ENCODE measurements at regions of chrX and their contacts with region 1.

Region 1: GRCh38 chrX:134520860-134521390 is 61.0 kb downstream of the HPRT1 start:
- DNase-seq: peak; percentile 78
- H3K4me3 ChIP-seq: no peak overlapping the region
- H3K27ac ChIP-seq: no peak overlapping the region
- H3K4me1 ChIP-seq: peaks cover 16% of the 10 kb centered on the region
- H3K27me3 ChIP-seq: no peaks in the 10 kb centered on the region
- CTCF ChIP-seq: peak; percentile 47 to 62
- POLR2A ChIP-seq: no peak

Region 2: DNA sequence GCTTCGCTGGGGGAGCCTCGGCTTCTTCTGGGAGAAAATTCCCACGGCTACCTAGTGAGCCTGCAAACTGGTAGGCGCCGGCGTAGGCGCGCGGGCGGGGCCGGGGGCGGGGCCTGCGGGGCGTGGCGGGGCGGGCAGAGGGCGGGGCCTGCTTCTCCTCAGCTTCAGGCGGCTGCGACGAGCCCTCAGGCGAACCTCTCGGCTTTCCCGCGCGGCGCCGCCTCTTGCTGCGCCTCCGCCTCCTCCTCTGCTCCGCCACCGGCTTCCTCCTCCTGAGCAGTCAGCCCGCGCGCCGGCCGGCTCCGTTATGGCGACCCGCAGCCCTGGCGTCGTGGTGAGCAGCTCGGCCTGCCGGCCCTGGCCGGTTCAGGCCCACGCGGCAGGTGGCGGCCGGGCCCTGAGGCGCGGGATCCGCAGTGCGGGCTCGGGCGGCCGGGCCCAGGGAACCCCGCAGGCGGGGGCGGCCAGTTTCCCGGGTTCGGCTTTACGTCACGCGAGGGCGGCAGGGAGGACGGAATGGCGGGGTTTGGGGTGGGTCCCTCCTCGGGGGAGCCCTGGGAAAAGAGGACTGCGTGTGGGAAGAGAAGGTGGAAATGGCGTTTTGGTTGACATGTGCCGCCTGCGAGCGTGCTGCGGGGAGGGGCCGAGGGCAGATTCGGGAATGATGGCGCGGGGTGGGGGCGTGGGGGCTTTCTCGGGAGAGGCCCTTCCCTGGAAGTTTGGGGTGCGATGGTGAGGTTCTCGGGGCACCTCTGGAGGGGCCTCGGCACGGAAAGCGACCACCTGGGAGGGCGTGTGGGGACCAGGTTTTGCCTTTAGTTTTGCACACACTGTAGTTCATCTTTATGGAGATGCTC is 60.7 kb before region 1 on chrX and contains the start of gene HPRT1:
- CTCF ChIA-PET with region 1: no interaction called
- POLR2A ChIA-PET with region 1: no interaction called
- dilution Hi-C with region 1: no loop called
- intact Hi-C with region 1: no loop called
- DNase-seq: peak; percentile 78
- H3K4me3 ChIP-seq: peak within 1 kb of the TSS; percentile 46 to 82 (median 75)
- H3K27ac ChIP-seq: peak within 1 kb of the TSS; percentile 55
- H3K4me1 ChIP-seq: no peaks in the 10 kb centered on the region
- H3K27me3 ChIP-seq: no peaks in the 10 kb centered on the region
- CTCF ChIP-seq: no peak
- POLR2A ChIP-seq: peak; percentile 65
- total RNA-seq, gene HPRT1: 43.3 and 51.0 TPM in 2 replicates

Region 3: GRCh38 chrX:134547047-134547679 is 26.2 kb after region 1 on chrX:
- CTCF ChIA-PET with region 1: interaction called, 12 read pairs
- POLR2A ChIA-PET with region 1: no interaction called
- dilution Hi-C with region 1: no loop called
- intact Hi-C with region 1: no loop called
- DNase-seq: peak; percentile 47
- H3K4me3 ChIP-seq: peak overlapping the region; percentile 48 to 97 (median 80)
- H3K27ac ChIP-seq: peak overlapping the region; percentile 64
- H3K4me1 ChIP-seq: peaks cover 46% of the 10 kb centered on the region
- H3K27me3 ChIP-seq: no peaks in the 10 kb centered on the region
- CTCF ChIP-seq: no peak
- POLR2A ChIP-seq: no peak

Region 4: DNA sequence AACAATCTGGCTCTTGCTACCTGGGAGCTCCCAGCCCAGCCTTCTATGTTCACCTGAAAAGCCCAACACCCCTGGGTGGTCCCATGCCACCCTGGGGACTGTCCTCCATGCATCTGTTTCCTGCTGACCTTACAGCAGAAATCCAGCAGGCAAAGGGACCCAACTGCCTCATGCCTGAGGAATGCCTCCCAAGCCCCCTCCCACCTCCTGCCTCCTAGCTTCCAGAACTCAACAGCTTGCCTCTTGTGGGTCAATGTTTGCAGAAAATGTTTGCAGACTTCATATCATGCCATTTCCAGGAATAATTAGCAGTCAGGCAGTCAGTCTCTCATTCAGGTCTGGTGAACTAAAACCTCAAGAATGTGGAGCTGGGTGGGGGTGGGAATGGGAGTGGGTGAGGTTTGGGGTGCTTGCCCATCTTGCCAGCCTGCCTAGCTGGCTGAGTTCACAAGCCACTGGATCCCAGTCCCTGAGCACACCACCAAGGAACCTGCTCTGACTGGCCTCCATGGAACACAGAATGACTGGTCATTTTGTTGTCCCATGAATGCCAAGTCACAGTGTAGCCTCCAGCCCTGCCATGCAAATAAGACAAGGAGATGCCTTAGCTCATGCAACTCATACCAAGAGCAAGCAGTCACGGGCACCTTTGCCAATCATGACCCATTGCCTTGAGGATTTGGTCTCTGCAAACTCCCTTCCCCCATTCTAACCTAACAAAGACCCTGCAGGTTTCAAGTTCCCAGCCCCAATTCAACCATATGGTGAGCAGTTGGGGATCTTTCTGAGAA is 149.4 kb after region 1 on chrX:
- CTCF ChIA-PET with region 1: interaction called, 3 read pairs
- POLR2A ChIA-PET with region 1: no interaction called
- dilution Hi-C with region 1: no loop called
- intact Hi-C with region 1: loop called (anchors 1 kb)
- DNase-seq: peak; percentile 29
- H3K4me3 ChIP-seq: no peak overlapping the region
- H3K27ac ChIP-seq: peak overlapping the region; percentile 87
- H3K4me1 ChIP-seq: peaks cover 27% of the 10 kb centered on the region
- H3K27me3 ChIP-seq: no peaks in the 10 kb centered on the region
- CTCF ChIP-seq: no peak
- POLR2A ChIP-seq: no peak

Region 5: GRCh38 chrX:134727371-134727770 is 206.4 kb after region 1 on chrX:
- CTCF ChIA-PET with region 1: interaction called, 10 read pairs
- POLR2A ChIA-PET with region 1: no interaction called
- dilution Hi-C with region 1: no loop called
- intact Hi-C with region 1: no loop called
- DNase-seq: peak; percentile 34
- H3K4me3 ChIP-seq: no peak overlapping the region
- H3K27ac ChIP-seq: no peak overlapping the region
- H3K4me1 ChIP-seq: no peaks in the 10 kb centered on the region
- H3K27me3 ChIP-seq: no peaks in the 10 kb centered on the region
- CTCF ChIP-seq: peak in 1 of 2 donors; percentile 14
- POLR2A ChIP-seq: no peak

Region 6: DNA sequence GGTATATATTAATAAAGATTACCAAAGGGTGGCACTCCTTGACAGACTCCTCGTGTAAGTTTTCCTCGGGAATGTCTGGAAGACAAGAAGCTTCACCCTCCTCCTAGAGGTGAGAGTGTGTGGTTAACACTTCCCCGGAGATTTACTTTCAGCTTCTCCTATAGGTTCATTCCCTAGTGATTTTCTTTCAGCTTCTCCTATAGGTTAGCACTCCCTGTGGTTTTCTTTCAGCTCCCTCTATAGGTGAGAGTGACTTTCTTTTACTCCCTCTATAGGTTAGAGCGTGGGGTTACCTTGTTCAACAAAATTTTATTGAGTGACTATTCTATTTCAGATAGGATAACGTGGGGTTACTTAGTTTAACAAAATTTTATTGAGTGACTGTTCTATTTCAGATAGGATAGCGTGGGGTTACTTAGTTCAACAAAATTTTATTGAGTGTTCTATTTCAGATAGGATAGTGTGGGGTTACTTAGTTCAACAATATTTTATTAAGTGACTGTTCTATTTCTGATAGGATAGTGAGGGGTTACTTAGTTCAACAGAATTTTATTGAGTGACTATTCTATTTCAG is 243.4 kb after region 1 on chrX:
- CTCF ChIA-PET with region 1: interaction called, 26 read pairs
- POLR2A ChIA-PET with region 1: no interaction called
- dilution Hi-C with region 1: no loop called
- intact Hi-C with region 1: no loop called
- DNase-seq: peak; percentile 41
- H3K4me3 ChIP-seq: no peak overlapping the region
- H3K27ac ChIP-seq: no peak overlapping the region
- H3K4me1 ChIP-seq: no peaks in the 10 kb centered on the region
- H3K27me3 ChIP-seq: no peaks in the 10 kb centered on the region
- CTCF ChIP-seq: peak in 1 of 2 donors; percentile 13
- POLR2A ChIP-seq: no peak

Measured in endothelial cell of umbilical vein (primary cell).